ENCODE measurements at regions of chr3 and their contacts with region 1.

Region 1: DNA sequence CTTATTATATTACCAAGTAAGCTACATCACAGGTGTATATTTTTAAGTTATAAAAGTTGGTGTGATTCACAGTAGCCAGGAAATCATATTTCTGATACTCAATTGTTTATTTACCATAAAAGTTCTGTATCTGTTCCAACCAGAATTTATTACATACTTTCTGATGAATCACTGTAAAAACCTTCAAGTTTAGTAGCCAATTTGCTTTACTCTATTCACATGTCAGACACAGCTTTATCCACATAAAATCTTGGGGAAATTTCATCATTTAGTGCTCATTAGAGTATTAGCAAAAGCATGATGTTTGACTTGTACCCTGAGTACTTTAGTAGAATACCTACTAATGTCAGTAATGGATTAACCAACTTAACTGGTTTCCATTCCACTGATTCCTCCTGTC is 249.8 kb downstream of the POLQ start:
- DNase-seq: no peak
- H3K4me3 ChIP-seq: no peak overlapping the region
- H3K27ac ChIP-seq: no peak overlapping the region
- H3K4me1 ChIP-seq: no peaks in the 10 kb centered on the region
- H3K27me3 ChIP-seq: no peaks in the 10 kb centered on the region
- CTCF ChIP-seq: no peak
- POLR2A ChIP-seq: no peak

Region 2: GRCh38 chr3:121330634-121331033 is 34.7 kb after region 1 on chr3:
- intact Hi-C with region 1: loop called (anchors 5 kb)
- DNase-seq: no peak
- H3K4me3 ChIP-seq: no peak overlapping the region
- H3K27ac ChIP-seq: no peak overlapping the region
- H3K4me1 ChIP-seq: no peaks in the 10 kb centered on the region
- H3K27me3 ChIP-seq: no peaks in the 10 kb centered on the region
- CTCF ChIP-seq: no peak
- POLR2A ChIP-seq: no peak